Mammary epithelial cell (primary cell): ENCODE measurements at regions of chr18 and their contacts with region 1.

Region 1: GRCh38 chr18:46073474-46074331 is 1.6 kb upstream of the PSTPIP2 start:
- DNase-seq: peak; percentile 63
- H3K4me3 ChIP-seq: no peak overlapping the region
- H3K27ac ChIP-seq: no peak overlapping the region
- H3K4me1 ChIP-seq: peaks cover 17% of the 10 kb centered on the region
- H3K27me3 ChIP-seq: no peaks in the 10 kb centered on the region
- CTCF ChIP-seq: peak; percentile 54 to 66

Region 2: DNA sequence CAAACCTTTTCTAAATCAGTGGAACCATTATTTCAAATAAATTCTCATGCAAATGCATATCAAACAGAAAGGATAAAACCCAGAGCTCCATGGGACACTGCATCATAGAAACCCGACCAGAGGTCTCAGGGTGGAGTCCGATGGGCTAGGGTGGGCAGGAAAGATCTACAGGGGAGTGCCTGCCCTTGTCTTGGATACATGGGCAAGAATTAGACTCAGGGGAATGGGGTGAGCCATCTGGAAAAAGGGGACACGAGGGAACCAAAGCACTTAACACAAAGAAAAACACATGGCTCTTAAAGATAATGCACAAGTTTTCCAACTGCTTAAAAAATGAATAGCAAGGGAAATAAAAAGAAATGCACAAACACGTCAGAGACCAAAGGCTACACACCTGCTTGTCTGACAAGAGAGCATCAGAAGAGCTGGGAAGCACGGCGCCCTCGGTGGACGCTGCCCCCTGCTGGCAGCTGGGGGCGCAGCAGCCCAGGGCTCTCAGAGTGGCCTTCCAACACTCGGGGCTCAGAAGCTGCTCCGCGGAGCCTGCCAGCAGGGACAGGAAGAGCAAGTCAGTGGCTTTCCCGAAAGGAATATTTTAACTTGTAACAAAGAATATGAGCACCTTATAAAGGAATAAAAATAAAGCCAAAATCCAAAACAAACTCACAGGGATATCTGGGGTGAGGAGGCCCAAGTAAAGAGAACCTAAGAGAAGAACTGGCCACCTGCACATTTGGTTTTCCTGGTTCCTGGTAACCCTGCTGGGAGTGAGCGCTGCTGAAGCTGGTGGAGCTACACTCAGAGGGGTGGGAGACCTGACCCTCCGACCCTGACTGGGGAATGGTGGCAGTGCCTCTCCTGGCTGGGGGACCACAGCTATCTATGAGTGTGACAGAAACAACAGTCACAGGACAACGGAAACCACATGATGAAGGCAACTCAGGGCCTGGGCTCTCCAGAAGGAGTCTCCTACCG is 193.7 kb before region 1 on chr18:
- CTCF ChIA-PET with region 1: interaction called, 5 read pairs
- dilution Hi-C with region 1: no loop called
- in situ Hi-C with region 1: no loop called
- intact Hi-C with region 1: loop called (anchors 2 kb)
- DNase-seq: peak; percentile 50
- H3K4me3 ChIP-seq: no peak overlapping the region
- H3K27ac ChIP-seq: no peak overlapping the region
- H3K4me1 ChIP-seq: no peaks in the 10 kb centered on the region
- H3K27me3 ChIP-seq: no peaks in the 10 kb centered on the region
- CTCF ChIP-seq: peak; percentile 99

Region 3: GRCh38 chr18:46028536-46028891 is 45.2 kb before region 1 on chr18:
- CTCF ChIA-PET with region 1: no interaction called
- dilution Hi-C with region 1: no loop called
- in situ Hi-C with region 1: no loop called
- intact Hi-C with region 1: loop called (anchors 2 kb)
- DNase-seq: no peak
- H3K4me3 ChIP-seq: no peak overlapping the region
- H3K27ac ChIP-seq: no peak overlapping the region
- H3K4me1 ChIP-seq: peaks cover 10% of the 10 kb centered on the region
- H3K27me3 ChIP-seq: no peaks in the 10 kb centered on the region
- CTCF ChIP-seq: no peak